ENCODE measurements at regions of chr6 and their contacts with region 1.

Region 1: GRCh38 chr6:38493931-38494547 is 145.7 kb downstream of the BTBD9 start:
- DNase-seq: peak; percentile 74 to 85
- H3K4me3 ChIP-seq: no peak overlapping the region
- H3K27ac ChIP-seq: no peak overlapping the region
- H3K4me1 ChIP-seq: no peaks in the 10 kb centered on the region
- H3K27me3 ChIP-seq: no peaks in the 10 kb centered on the region
- CTCF ChIP-seq: peak; percentile 90 to 91

Region 2: GRCh38 chr6:37794825-37795224 is 699.2 kb before region 1 on chr6:
- intact Hi-C with region 1: loop called (anchors 2 kb)
- DNase-seq: no peak
- H3K4me3 ChIP-seq: no peak overlapping the region
- H3K27ac ChIP-seq: no peak overlapping the region
- H3K4me1 ChIP-seq: peaks cover 0 to 18% (median 8%) of the 10 kb centered on the region in 4 donors
- H3K27me3 ChIP-seq: no peaks in the 10 kb centered on the region
- CTCF ChIP-seq: no peak

Region 3: DNA sequence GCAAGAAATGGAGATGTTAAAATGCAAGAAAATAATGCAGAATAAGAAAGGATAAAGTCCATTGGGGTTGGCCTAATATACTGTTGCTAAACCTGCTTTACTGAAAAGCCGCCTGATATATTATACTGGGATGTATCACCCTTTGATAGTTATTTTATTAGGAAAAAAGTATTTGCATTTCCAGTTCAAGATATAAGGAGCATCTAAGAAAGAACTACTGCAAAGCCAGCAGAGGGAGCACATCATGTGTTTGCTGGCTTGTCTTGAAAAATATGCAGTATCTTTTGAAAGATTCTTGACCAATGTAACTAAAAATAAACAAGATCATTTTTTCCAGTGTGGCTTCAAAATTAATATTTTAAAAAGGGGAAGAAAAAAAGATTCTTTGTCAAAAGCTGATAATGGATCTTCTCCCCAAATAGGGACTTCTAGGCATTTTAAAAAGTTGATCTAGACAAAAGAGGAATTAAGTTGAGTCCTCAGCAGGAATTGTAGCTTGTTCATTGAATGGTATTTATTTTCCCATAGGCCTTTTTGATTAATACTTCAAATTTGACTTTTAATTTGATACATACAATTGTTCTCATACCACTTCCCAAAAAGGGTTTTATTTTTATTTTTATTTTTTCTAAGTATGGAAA is 459.6 kb before region 1 on chr6:
- intact Hi-C with region 1: loop called (anchors 10 kb)
- DNase-seq: no peak
- H3K4me3 ChIP-seq: no peak overlapping the region
- H3K27ac ChIP-seq: no peak overlapping the region
- H3K4me1 ChIP-seq: peaks cover 0 to 31% (median 8%) of the 10 kb centered on the region in 4 donors
- H3K27me3 ChIP-seq: no peaks in the 10 kb centered on the region
- CTCF ChIP-seq: peak; percentile 35 to 38

Region 4: GRCh38 chr6:38445336-38445735 is 48.7 kb before region 1 on chr6:
- intact Hi-C with region 1: no loop called
- DNase-seq: no peak
- H3K4me3 ChIP-seq: no peak overlapping the region
- H3K27ac ChIP-seq: no peak overlapping the region
- H3K4me1 ChIP-seq: peaks cover 0 to 7% (median 0%) of the 10 kb centered on the region in 4 donors
- H3K27me3 ChIP-seq: no peaks in the 10 kb centered on the region
- CTCF ChIP-seq: no peak

Measured in tibial artery (tissue), 4 donors.